Right ventricle myocardium inferior (tissue), 1 donor: ENCODE measurements at regions of chr6 and their contacts with region 1.

Region 1: DNA sequence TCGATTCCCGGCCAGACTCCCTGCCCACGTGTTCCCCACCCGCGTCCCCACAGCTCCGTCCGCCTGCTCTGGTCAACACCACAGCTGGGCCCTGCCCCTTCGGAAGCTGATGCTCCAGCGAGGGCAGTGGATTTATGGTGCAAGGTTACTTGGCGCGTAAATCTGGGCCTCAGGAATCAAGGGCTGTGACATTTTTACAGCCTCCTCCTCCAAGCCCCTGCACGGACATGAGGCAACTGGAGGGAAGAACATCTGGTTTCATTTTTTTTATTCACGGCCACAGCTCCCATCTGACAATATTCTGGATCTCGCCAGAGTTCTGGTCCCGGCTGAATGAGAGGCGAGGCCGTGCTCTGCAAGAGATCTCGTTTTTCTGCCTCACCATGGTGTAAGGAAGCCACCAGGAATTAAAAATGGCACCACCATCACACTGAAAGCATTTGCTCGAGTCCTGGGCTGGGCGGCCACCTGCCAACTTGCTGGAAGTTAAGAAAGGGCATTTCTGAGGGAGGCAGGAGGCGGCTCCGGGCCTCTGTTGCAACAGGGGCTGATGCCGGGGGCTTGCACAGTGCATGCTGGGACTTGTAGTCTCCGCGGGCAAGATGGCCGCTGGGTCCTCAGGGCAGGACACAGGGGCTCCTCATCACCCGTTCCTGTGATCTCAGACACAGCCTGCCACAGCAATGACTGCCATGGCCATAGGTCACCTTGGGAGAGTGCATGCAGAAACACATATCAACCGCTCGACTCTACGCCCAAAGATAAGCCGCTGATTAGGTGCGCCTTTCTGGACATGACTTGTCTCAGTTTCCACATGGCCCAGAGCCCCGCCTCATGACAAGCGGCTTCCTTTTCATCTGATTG is 148.5 kb downstream of the LY86 start:
- DNase-seq: peak; percentile 92
- ATAC-seq: peak; percentile 84

Region 2: GRCh38 chr6:6591778-6592465 is 145.1 kb before region 1 on chr6:
- intact Hi-C with region 1: no loop called
- DNase-seq: peak; percentile 73
- ATAC-seq: peak; percentile 23

Region 3: GRCh38 chr6:6701864-6702263 is 35.2 kb before region 1 on chr6:
- intact Hi-C with region 1: no loop called
- DNase-seq: no peak
- ATAC-seq: no peak

Region 4: GRCh38 chr6:6975459-6976111 is 238.6 kb after region 1 on chr6:
- intact Hi-C with region 1: loop called (anchors 5 kb)
- DNase-seq: no peak
- ATAC-seq: peak; percentile 85

Region 5: DNA sequence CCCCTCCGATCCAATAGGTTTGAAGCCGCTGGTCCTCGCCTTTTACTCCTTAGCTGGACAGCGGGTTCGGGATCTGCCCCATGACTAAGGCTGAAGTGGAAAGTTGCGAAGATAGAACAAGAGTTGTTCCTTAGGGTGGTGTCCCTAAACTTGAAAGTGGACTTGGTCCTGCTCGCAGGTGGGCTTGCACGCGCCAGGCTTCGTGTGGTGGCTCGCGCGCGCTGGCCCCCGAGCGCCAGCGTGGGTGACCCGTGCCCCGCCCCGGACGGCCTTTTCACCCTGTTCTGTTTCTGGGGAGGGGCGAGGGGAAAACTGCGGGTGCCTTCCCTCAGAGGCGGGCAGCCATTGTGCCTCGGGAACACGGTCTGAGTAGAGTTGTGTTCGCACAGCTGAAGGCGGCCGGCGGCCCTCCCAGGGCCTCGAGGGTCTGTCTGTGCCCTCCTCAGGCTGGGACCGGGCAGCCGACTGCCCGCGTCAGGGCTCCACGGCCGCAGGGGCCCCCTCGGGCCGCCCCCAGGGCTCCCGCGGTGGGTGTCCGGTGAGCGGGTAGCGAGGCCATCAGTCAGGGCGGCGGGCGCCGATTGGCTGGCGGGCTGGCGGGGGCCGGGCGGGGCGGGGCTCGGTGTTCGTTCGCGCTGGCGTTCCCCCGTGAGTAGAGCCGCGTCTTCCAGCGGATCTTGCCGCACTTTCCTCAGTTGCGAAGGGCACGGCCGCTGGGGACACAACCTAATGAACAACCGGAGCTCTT is 403.8 kb after region 1 on chr6:
- intact Hi-C with region 1: loop called (anchors 10 kb)
- DNase-seq: peak; percentile 95
- ATAC-seq: peak; percentile 95